Lower leg skin (tissue), 4 donors: ENCODE measurements at regions of chr4 and their contacts with region 1.

Region 1: DNA sequence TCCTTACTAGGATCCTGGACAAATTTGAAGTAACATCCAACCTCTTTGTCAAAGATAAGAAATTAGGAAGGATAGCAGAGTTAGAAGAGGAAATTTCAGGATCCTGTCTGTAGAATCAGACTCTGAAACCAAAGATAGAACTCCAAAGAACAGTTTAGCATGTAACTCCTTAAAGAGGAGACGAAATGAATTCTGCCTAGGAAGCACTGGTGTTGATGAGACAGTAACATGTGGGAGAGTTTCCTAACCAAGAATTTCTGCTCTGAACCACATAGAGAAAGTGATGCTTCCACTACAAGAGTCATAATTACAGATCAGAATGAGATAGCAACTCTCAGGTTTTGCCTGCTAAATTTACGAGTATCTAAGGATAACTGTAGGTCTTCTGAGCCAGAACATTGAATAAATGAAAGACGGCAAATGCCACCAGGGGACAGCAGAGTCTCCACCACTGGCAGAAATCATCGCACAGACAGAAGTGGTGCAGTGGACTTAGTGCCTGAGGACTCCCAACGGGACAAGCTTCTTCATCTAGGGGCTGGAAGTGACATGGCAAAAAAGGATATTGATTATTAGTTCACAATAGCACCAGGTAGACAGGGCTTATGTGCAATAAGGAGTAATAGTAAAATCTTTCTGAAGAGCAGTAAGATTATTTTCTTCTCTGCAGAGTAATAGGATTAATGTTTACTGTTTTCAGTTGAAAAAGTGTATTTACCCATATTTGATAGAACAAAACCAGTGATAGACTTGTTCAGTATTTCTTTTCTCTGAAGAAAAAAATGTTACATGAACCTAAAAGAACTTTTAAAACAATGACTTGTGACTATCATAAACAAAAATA is 6.7 kb upstream of the PPID start:
- DNase-seq: peak; percentile 63 to 90
- H3K4me3 ChIP-seq: no peak overlapping the region
- CTCF ChIP-seq: peak in 2 of 3 donors; percentile 77 to 84
- POLR2A ChIP-seq: no peak

Region 2: DNA sequence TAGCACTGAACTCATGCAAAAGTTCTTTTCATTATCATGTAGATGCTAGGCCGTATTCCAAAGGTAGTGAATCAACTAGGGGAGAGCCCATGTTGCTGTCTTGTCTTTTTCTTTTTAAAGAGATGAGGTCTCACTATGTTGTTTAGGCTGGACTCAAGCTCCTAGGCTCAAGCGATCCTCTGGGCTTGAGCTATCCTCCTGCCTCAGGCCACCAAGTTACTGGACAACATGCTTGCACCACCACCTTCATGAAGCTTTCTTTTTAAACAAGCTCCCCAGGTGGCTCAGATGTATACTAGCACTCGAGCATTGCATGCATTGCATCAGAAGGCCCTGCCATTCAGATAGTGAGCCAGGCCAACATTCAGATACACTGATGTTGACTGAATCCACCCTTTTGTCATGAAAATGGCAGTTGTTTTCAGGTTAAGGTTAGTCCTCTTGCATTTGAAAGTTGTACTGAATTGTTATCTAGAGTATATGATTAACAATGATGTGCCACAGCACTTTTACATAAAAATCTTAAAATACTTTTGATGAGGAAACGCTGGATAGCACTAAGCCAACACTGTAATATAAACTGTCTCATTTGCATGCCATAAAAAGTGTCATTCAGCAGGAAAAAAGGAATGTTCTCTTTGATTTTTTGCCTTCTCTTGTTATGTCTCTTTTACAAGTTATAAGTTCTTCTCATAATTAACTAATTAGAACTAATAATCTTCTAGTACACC is 115.5 kb after region 1 on chr4:
- intact Hi-C with region 1: loop called (anchors 5 kb)
- DNase-seq: no peak
- H3K4me3 ChIP-seq: no peak overlapping the region
- CTCF ChIP-seq: no peak
- POLR2A ChIP-seq: no peak